ENCODE measurements at regions of chr5 and their contacts with region 1.

Region 1: DNA sequence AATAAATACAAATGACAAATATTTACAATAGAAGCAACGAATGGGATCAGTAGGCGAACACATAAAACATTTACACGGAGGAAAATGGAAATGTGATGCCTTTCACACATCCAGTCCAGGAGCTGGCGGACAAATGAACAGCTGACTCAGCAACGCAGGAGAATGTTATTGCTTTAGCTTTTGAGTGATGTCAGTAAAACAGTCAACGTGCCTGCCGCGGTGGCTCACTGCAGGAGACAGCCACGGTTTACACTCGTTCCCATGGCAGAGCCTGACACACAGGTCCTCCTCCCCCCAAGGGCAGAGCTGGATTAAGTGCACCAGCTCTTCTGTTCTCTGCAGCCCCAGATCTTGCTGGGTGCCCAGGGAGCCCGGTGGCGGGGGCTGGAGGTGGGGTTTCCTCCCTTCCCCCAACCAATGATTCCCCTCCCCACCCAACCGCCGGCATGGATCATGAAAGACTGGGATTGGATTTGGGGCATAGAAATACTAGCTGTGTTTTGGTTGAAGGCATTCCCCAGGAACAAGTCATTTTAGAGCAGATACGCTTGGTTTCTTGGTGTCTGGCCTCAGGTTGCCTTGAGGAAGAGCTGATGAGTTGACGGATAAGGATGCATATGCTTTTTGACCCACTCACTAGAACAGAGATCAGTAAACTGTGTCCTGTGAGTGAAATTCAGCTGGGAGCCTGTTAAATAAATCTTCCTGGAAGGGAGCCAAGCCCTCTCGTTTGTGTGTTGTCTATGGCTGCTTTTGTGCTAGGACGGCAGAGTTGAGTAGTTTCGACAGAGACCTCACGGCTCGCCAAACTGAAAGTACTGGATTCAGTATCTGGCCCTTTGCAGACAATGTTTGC is 12.5 kb downstream of the STC2 start:
- DNase-seq: peak; percentile 67
- H3K4me3 ChIP-seq: peak overlapping the region; percentile 1; the same call in 1 of the 2 replicates
- H3K27ac ChIP-seq: peak overlapping the region; percentile 86
- H3K27me3 ChIP-seq: no peaks in the 10 kb centered on the region
- CTCF ChIP-seq: no peak

Region 2: DNA sequence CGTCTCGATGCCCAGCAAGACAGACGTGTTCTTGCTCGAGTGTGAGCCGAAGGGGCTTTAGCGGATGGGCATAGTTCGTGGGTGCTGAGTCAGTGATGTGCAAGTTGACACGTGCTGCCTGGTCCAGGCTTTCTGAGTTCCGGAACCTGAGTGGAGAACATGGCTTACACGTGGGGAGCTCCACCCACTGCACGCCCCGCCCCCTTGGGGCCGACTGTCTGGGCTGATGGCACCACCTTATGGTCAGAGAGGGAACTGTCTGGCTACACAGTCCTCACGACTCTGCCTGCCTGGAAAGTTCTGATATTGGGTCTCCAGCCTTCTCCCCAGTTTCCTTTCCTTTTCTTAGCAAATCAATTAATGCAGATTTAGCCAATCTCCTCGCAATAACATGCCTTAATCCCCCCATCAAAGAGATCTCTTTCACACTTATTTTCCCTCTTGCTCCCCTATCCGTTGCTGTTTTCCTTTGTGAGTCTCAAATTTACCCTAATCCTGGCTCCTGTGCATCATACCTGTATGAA is 16.3 kb after region 1 on chr5:
- CTCF ChIA-PET with region 1: interaction called, 7 read pairs
- POLR2A ChIA-PET with region 1: interaction called, 45 read pairs
- DNase-seq: no peak
- H3K4me3 ChIP-seq: no peak overlapping the region
- H3K27ac ChIP-seq: no peak overlapping the region
- H3K27me3 ChIP-seq: no peaks in the 10 kb centered on the region
- CTCF ChIP-seq: peak; percentile 90

Measured in AG04450 (cell line).